ENCODE measurements at regions of chr19 and their contacts with region 1.

Region 1: GRCh38 chr19:36850559-36851442 is at the start of gene ZNF345:
- DNase-seq: peak; percentile 87 to 94 (median 89)
- H3K4me3 ChIP-seq: peak within 1 kb of the TSS; percentile 88 to 97
- H3K4me3 Mint-ChIP-seq: no peak within 1 kb of the TSS
- H3K27ac ChIP-seq: peak within 1 kb of the TSS; percentile 86
- H3K27ac Mint-ChIP-seq: no peak within 1 kb of the TSS
- H3K4me1 ChIP-seq: peaks cover 29% of the 10 kb centered on the region
- H3K4me1 Mint-ChIP-seq: peaks cover 5 to 24% (median 11%) of the 10 kb centered on the region in 4 donors
- H3K27me3 ChIP-seq: no peaks in the 10 kb centered on the region
- H3K27me3 Mint-ChIP-seq: no peaks in the 10 kb centered on the region
- total RNA-seq, gene ZNF345: 17.6 to 18.0 TPM

Region 2: DNA sequence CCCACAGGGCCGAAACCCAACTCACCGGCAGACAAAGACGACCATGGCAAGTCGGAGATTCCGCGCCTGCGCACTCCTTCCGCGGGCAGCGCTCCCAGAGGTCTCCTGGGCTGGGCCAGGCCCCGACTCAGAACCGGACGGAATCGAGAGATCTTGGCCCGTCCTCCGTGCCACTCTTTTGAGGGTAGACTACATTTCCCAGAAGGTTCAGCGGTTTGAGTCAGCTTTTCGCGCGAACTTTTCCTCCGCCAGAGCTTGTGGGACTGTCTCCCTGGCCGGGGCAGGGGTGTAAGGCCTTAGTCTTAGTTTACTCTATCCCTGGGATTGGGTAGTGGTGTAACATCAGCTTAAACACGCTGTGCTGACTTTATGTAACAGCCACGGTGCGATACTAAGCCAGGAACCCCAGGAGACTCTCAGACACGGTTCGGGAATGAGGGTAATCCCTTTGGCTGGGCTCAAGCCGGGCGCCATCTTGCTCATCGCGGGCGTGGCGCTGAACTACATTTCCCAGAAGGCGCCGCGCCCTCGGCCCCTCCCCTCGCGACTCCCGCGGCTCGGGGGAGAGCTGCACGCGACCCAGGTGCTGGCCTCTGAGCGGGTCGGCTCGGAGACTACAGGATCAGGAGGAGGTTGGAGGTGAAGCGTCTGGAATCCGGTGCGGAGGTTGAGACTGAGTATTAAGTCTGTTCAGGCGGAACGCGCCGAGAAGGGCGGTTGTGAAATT is 322.4 kb before region 1 on chr19 and contains the start of gene ZNF260:
- CTCF ChIA-PET with region 1: no interaction called
- POLR2A ChIA-PET with region 1: interaction called, 12 read pairs
- intact Hi-C with region 1: loop called (anchors 1 kb)
- DNase-seq: peak; percentile 90 to 95 (median 93)
- H3K4me3 ChIP-seq: peak within 1 kb of the TSS; percentile 88 to 99
- H3K4me3 Mint-ChIP-seq: peak within 1 kb of the TSS; percentile 91 to 100 (median 97)
- H3K27ac ChIP-seq: peak within 1 kb of the TSS; percentile 87
- H3K27ac Mint-ChIP-seq: peak within 1 kb of the TSS; percentile 91 to 99 (median 97)
- H3K4me1 ChIP-seq: peaks cover 22% of the 10 kb centered on the region
- H3K4me1 Mint-ChIP-seq: peaks cover 17 to 29% (median 22%) of the 10 kb centered on the region in 4 donors
- H3K27me3 ChIP-seq: no peaks in the 10 kb centered on the region
- H3K27me3 Mint-ChIP-seq: no peaks in the 10 kb centered on the region
- total RNA-seq, gene ZNF260: 15.4 to 18.8 TPM

Region 3: DNA sequence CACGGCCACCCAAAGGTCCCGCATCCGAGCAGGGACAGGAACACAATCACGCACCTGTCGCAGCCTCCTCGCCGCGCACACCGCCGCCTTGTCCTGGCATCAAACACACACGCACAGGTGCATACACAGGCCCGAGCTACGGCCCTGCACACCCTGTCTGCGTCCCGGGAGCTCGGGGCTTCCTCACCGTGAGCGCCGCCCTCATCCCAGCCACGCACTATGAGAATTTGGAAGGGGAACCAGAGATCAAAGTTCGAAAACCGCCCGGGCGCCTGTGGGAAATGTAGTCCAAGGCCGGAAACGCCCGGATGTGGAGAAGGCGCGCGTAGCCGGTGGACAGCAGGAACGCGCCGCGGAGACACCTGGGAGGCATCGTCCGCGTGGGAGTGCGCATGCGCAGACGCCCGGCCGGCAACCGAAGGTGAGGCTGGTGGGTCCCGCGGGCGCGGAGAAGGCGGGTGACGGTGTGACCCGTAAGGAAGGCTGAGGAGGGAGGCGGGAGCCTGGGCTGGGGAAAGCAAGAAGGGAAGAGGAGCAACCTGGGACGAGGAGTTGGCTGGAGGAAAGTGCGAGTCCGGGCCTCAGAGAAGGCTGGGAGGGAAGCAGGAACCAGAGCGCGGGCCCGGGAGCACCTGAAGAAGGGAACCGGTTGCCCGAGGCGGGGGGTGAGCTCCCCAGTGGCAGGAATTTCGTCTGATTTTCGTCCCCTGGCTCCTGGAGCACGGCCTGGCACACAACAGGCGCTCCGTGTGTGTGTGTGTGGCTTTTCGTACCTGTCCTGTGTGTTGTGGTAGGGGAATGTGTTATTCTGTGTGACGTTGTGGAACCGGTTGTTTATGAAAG is 163.4 kb before region 1 on chr19 and contains the start of gene ZNF567:
- CTCF ChIA-PET with region 1: no interaction called
- POLR2A ChIA-PET with region 1: interaction called, 5 read pairs
- intact Hi-C with region 1: loop called (anchors 1 kb)
- DNase-seq: peak; percentile 94 to 96 (median 95)
- H3K4me3 ChIP-seq: peak within 1 kb of the TSS; percentile 62 to 80
- H3K4me3 Mint-ChIP-seq: peak within 1 kb of the TSS; percentile 97 to 100 (median 99)
- H3K27ac ChIP-seq: peak within 1 kb of the TSS; percentile 75
- H3K27ac Mint-ChIP-seq: peak within 1 kb of the TSS; percentile 95 to 99 (median 97)
- H3K4me1 ChIP-seq: peaks cover 22% of the 10 kb centered on the region
- H3K4me1 Mint-ChIP-seq: peaks cover 22 to 49% (median 30%) of the 10 kb centered on the region in 4 donors
- H3K27me3 ChIP-seq: no peaks in the 10 kb centered on the region
- H3K27me3 Mint-ChIP-seq: no peaks in the 10 kb centered on the region
- total RNA-seq, gene ZNF567: 17.0 to 19.8 TPM

Region 4: DNA sequence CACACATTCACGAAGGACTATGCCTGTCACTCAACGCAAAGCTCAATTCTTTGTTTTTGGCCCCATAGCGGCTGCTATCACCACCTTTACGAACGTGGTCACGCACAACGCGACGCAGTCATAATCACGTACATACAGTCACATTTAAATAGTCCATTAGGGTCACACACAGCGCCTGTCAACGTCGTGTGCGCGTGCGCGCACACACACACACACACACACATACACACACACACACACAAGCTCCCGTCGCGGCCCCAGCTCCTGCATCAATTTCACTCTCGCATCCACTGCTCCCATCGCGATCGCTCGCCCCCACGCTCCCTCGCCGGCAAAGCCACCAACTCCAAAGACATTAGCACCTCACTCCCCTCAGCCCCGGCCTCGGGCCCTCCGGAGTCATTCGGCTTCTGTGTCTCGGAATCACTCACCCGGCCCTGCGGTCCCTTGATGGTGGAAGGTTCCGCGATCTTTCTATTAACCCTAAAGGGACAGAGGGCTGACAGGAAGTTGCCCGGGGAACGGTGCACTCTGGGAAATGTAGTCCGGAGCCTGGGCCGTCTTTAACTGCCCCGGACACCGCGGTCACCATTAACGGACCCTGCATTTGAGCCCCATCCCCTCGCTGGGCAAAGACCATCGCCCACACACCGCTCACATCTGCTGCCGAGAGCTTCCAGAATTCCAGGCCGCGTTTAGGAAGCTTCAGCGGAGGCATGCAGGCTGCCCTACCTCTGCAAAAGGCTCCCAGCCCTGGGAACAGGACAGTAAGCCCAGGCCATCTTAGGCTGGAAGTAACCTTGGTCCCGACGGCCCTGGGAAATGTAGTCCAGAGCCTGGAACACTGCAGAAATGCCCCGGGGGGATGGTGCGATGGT is 12.7 kb before region 1 on chr19 and contains the start of gene ZNF790:
- CTCF ChIA-PET with region 1: interaction called, 8 read pairs
- POLR2A ChIA-PET with region 1: interaction called, 183 read pairs
- intact Hi-C with region 1: loop called (anchors 1 kb)
- DNase-seq: peak; percentile 88 to 94 (median 91)
- H3K4me3 ChIP-seq: peak within 1 kb of the TSS; percentile 48 to 97
- H3K4me3 Mint-ChIP-seq: peak within 1 kb of the TSS in 4 of 8 donors; percentile 31 to 71 (median 44)
- H3K27ac ChIP-seq: peak within 1 kb of the TSS; percentile 73
- H3K27ac Mint-ChIP-seq: peak within 1 kb of the TSS in 2 of 7 donors; percentile 45 to 54
- H3K4me1 ChIP-seq: peaks cover 18% of the 10 kb centered on the region
- H3K4me1 Mint-ChIP-seq: peaks cover 0 to 13% (median 5%) of the 10 kb centered on the region in 4 donors
- H3K27me3 ChIP-seq: no peaks in the 10 kb centered on the region
- H3K27me3 Mint-ChIP-seq: no peaks in the 10 kb centered on the region
- total RNA-seq, gene ZNF790: 12.4 to 13.4 TPM

Region 5: DNA sequence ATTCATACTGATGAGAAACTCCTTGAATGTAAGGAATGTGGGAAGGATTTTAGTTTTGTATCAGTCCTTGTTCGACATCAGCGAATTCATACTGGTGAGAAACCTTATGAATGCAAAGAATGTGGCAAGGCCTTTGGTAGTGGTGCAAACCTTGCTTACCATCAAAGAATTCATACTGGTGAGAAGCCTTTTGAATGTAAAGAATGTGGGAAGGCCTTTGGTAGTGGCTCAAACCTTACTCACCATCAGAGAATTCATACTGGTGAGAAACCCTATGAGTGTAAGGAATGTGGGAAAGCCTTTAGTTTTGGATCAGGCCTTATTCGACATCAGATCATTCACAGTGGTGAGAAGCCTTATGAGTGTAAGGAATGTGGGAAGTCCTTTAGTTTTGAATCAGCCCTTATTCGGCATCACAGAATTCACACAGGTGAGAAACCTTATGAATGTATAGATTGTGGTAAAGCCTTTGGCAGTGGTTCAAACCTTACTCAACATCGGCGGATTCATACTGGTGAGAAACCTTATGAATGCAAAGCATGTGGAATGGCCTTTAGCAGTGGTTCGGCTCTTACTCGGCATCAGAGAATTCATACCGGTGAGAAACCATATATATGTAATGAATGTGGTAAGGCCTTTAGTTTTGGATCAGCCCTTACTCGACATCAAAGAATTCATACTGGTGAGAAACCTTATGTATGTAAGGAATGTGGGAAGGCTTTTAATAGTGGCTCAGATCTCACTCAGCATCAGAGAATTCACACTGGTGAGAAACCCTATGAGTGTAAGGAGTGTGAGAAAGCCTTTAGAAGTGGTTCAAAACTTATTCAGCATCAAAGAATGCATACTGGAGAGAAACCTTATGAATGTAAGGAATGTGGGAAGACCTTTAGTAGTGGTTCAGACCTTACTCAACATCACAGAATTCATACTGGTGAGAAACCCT is 26.5 kb after region 1 on chr19:
- CTCF ChIA-PET with region 1: no interaction called
- POLR2A ChIA-PET with region 1: no interaction called
- intact Hi-C with region 1: no loop called
- DNase-seq: no peak
- H3K4me3 ChIP-seq: peak overlapping the region in 1 of 2 donors; percentile 15
- H3K4me3 Mint-ChIP-seq: no peak overlapping the region
- H3K27ac ChIP-seq: no peak overlapping the region
- H3K27ac Mint-ChIP-seq: no peak overlapping the region
- H3K4me1 ChIP-seq: no peaks in the 10 kb centered on the region
- H3K4me1 Mint-ChIP-seq: peaks cover 0 to 1% (median 0%) of the 10 kb centered on the region in 4 donors
- H3K27me3 ChIP-seq: no peaks in the 10 kb centered on the region
- H3K27me3 Mint-ChIP-seq: no peaks in the 10 kb centered on the region

Region 6: DNA sequence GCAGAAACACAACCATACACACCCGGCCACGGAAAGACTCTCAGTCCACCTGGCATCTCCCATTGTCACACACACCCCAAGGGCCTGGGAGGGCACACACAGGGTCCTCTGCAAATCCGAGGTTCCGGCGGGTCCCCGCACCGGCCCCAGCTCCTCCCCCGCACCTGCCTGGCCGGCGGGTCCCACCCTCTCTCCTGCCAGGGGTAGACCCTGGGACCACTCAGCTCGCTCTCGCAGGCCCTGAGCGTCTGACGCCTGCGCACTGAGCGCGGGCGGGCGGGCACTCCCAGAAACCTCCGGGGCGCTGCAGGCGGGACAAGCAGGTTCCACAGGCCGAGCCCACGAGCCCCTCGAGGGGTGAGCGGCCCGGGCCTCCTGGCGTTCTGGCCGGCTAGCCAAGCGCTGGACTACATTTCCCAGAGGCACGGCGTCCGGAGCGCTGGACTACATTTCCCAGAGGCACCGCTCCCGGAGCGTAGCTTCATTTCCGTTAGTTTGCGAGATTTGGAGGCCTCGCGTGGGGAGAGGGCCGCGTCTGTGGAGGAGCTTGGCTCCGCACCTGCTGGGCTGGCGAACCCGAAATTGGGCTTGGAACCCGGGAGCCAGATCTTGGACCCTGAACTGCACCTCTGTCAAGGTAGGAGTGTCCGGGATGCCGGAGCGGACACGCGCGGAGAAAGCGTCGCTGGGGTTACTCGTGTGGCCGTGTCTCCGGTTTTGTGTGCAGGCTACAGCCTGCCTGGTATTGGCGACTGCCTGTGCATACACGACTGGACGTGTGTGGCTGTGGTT is 227.3 kb after region 1 on chr19 and contains the start of gene ZNF420:
- CTCF ChIA-PET with region 1: no interaction called
- POLR2A ChIA-PET with region 1: interaction called, 9 read pairs
- intact Hi-C with region 1: loop called (anchors 2 kb)
- DNase-seq: peak; percentile 85 to 92 (median 87)
- H3K4me3 ChIP-seq: peak within 1 kb of the TSS; percentile 61 to 88
- H3K4me3 Mint-ChIP-seq: peak within 1 kb of the TSS; percentile 90 to 100 (median 98)
- H3K27ac ChIP-seq: peak within 1 kb of the TSS; percentile 73
- H3K27ac Mint-ChIP-seq: peak within 1 kb of the TSS; percentile 85 to 99 (median 95)
- H3K4me1 ChIP-seq: peaks cover 23% of the 10 kb centered on the region
- H3K4me1 Mint-ChIP-seq: peaks cover 22 to 43% (median 27%) of the 10 kb centered on the region in 4 donors
- H3K27me3 ChIP-seq: no peaks in the 10 kb centered on the region
- H3K27me3 Mint-ChIP-seq: no peaks in the 10 kb centered on the region
- total RNA-seq, gene ZNF420: 25.0 to 28.6 TPM

Region 7: DNA sequence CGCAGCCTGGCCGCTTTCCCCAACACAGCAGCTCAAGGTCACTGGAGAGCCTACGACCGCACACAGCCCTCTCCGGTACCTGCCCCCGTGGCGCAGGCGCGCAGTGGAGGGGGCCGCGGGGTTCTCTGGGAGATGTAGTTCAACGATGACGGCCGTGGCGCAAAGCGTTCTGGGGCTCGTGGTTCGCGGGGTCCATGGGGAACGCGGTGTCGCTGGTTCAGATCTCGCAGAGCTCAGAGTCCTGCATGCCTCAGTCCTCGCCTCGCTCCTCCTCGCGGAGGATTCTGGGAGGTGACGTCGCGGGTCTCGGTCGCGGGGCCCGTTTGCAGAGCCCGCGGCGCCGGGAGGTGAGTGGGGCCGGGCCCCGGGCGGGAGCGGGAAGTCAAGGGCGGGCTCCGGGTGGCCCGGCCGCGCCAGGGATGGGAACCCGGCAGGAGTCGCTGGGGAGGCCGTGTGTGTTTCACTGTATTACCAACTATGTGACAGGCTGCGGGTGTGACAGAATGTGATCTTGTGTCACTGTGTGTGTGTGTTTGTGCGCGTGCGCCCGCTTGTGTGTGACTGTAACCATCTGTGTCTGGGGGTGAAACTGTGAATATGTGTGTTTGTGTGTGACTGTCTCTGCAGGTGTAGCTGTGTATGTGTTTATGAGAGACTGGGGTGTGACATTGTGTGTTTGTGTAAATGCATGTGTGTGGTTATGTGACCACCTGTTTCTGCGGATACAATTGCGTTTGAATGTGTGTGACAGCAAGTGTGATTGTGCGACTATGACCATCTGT is 520.3 kb after region 1 on chr19 and contains the start of gene ZNF527:
- CTCF ChIA-PET with region 1: no interaction called
- POLR2A ChIA-PET with region 1: interaction called, 5 read pairs
- intact Hi-C with region 1: loop called (anchors 2 kb)
- DNase-seq: peak; percentile 96 to 98 (median 97)
- H3K4me3 ChIP-seq: peak within 1 kb of the TSS; percentile 63 to 86
- H3K4me3 Mint-ChIP-seq: peak within 1 kb of the TSS; percentile 97 to 100 (median 98)
- H3K27ac ChIP-seq: peak within 1 kb of the TSS; percentile 78
- H3K27ac Mint-ChIP-seq: peak within 1 kb of the TSS; percentile 97 to 99 (median 98)
- H3K4me1 ChIP-seq: peaks cover 7% of the 10 kb centered on the region
- H3K4me1 Mint-ChIP-seq: peaks cover 9 to 28% (median 16%) of the 10 kb centered on the region in 4 donors
- H3K27me3 ChIP-seq: no peaks in the 10 kb centered on the region
- H3K27me3 Mint-ChIP-seq: no peaks in the 10 kb centered on the region
- total RNA-seq, gene ZNF527: 12.7 to 13.3 TPM